Sigmoid colon (tissue), 7 donors: ENCODE measurements at regions of chr4 and their contacts with region 1.

Region 1: DNA sequence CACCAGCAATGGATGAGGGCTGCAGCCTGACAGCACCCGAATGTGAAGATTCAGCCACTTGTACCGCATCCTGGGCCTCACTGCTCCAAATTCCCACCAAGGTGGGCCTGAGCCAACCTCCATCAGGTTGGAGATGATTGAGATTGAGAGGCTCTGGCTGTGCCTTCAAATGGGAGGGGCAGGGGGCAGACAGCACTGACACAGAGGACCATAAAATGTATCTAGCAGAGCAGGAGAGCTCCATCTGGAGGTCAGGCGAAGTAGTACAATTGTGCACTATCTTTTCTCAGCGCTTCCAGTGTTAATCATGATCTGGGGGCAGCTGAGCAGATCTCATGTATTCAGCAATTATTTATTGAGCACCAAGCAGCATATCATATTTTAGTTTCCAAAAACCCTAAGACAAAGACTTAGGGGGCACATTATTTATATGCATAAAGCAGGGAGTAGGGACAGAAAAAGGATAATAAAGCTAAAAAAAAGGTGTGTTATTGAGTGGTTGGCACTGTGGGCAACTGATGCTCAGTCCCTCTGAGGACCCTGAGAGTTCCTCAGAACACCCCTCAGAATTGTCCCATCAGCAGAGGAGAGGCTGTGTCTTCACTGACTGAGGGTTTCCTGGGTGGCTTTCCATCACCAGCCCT is 31.6 kb upstream of the C1QTNF7 start:
- DNase-seq: no peak
- H3K4me3 ChIP-seq: no peak overlapping the region
- H3K27ac ChIP-seq: no peak overlapping the region
- H3K4me1 ChIP-seq: peaks cover 0 to 55% (median 26%) of the 10 kb centered on the region in 4 donors
- H3K27me3 ChIP-seq: no peaks in the 10 kb centered on the region
- CTCF ChIP-seq: peak in 3 of 4 experiments; percentile 37 to 63 (median 43)
- EP300 ChIP-seq: no peak
- POLR2A ChIP-seq: no peak

Region 2: GRCh38 chr4:14908635-14909034 is 487.6 kb before region 1 on chr4:
- intact Hi-C with region 1: no loop called
- DNase-seq: no peak
- H3K4me3 ChIP-seq: no peak overlapping the region
- H3K27ac ChIP-seq: no peak overlapping the region
- H3K4me1 ChIP-seq: no peaks in the 10 kb centered on the region
- H3K27me3 ChIP-seq: no peaks in the 10 kb centered on the region
- CTCF ChIP-seq: no peak
- EP300 ChIP-seq: no peak
- POLR2A ChIP-seq: no peak

Region 3: GRCh38 chr4:15238720-15239119 is 157.6 kb before region 1 on chr4:
- intact Hi-C with region 1: loop called (anchors 5 kb)
- DNase-seq: no peak
- H3K4me3 ChIP-seq: no peak overlapping the region
- H3K27ac ChIP-seq: peak overlapping the region in 1 of 4 donors; percentile 48
- H3K4me1 ChIP-seq: peaks cover 0 to 46% (median 20%) of the 10 kb centered on the region in 4 donors
- H3K27me3 ChIP-seq: no peaks in the 10 kb centered on the region
- CTCF ChIP-seq: peak; percentile 14 to 56 (median 40)
- EP300 ChIP-seq: no peak
- POLR2A ChIP-seq: no peak

Region 4: DNA sequence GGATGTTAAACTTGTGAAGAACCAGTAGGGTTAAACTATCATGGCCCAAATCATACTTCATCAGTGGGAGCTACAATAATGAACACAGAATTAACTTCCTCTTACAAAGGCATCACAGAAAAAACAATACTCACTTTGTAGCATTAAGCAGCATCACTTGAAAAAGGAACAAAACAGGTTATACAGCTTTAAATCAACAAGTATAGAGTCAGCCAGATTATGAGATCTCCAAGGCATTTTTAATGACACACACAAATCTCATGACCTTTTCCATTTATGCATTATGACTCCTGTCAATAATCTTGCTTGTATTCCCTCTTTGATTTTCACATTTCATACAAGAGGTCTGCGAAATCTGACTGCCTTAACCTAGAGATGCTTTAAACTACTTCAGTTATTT is 240.6 kb after region 1 on chr4:
- intact Hi-C with region 1: no loop called
- DNase-seq: no peak
- H3K4me3 ChIP-seq: no peak overlapping the region
- H3K27ac ChIP-seq: no peak overlapping the region
- H3K4me1 ChIP-seq: no peaks in the 10 kb centered on the region
- H3K27me3 ChIP-seq: no peaks in the 10 kb centered on the region
- CTCF ChIP-seq: no peak
- EP300 ChIP-seq: no peak
- POLR2A ChIP-seq: no peak